Body of pancreas (tissue), 4 donors: ENCODE measurements at regions of chr11 and their contacts with region 1.

Region 1: GRCh38 chr11:46308631-46309419 is 31.4 kb downstream of the CREB3L1 start:
- DNase-seq: peak; percentile 73 to 83 (median 79)
- ATAC-seq: peak; percentile 79
- H3K4me3 ChIP-seq: no peak overlapping the region
- H3K27ac ChIP-seq: no peak overlapping the region
- H3K4me1 ChIP-seq: no peaks in the 10 kb centered on the region
- H3K27me3 ChIP-seq: no peaks in the 10 kb centered on the region
- CTCF ChIP-seq: peak; percentile 66 to 78 (median 74)
- POLR2A ChIP-seq: no peak

Region 2: DNA sequence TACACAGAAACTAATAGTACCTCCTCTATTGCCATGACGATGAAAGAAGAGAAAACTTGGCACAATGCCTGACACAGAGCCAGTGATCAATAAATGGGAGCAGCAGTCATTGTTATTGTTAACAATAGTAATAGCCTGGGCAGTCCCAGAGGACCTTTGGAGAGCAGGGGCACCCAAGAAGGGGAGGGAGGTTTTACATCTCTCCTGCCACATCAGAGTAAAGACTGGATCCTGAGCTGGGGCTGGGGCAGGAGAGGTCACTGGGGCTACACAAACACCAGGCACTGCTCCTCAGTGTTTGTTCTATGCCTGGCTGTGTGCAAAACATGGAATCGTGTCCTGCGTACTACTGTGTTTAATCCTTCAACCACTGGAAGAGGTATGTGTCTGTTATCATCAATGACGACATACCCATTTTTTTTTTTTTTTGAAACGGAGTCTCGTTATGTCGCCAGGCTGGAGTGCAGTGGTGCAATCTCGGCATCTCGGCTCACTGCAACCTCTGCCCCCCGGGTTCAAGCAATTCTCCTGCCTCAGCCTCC is 56.4 kb before region 1 on chr11:
- intact Hi-C with region 1: loop called (anchors 5 kb)
- DNase-seq: peak in 2 of 4 donors; percentile 42 to 57
- ATAC-seq: peak; percentile 64
- H3K4me3 ChIP-seq: no peak overlapping the region
- H3K27ac ChIP-seq: no peak overlapping the region
- H3K4me1 ChIP-seq: peaks cover 19% of the 10 kb centered on the region
- H3K27me3 ChIP-seq: no peaks in the 10 kb centered on the region
- CTCF ChIP-seq: no peak
- POLR2A ChIP-seq: no peak